Sigmoid colon (tissue), 7 donors: ENCODE measurements at regions of chr6 and their contacts with region 1.

Region 1: DNA sequence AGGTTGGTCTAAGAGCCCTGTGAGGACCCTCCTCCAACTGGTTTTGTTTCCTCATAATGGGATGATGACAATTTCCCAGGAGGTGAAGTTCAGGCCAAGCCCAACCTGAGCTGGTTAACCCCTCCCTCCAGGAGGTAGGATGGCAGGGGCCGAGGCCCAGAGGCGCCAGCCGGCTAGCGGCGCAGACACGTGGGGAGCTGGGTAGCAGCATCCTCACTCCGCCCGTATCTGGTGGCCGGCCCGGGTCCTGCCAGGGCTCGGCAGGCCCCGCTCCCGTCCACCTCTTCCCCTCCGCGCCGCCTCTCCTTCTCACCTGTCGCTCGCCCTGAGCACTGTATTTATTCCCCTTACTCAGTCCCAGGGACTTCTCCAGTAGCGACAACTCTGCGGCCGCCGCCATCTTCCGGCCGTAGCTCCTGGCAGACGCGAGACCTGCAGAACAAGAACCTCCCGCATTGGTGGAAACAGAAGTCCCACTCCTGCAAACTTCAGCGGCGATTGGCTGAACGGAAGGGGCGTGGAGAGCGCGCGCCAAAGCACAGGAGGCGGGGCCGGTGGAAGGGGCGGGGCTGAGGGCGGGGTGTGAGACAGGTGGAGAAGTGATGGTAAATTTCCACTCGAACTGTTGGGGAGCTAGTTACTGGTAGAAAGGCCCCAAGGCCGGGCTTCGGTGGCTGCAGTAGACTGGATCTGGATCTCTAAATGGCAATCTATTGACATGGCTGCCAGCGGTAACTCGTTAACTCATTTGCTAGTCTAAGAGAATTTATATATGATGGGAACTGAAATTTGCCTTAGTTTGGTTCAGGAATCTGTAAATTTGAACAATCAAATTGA is at the start of gene EEF1E1:
- DNase-seq: peak; percentile 95
- H3K4me3 ChIP-seq: peak within 1 kb of the TSS; percentile 78 to 93 (median 86)
- H3K27ac ChIP-seq: peak within 1 kb of the TSS; percentile 58 to 69 (median 64)
- H3K4me1 ChIP-seq: peaks cover 0 to 9% (median 8%) of the 10 kb centered on the region in 4 donors
- H3K27me3 ChIP-seq: peaks cover 0 to 13% (median 5%) of the 10 kb centered on the region in 3 donors
- CTCF ChIP-seq: no peak
- EP300 ChIP-seq: no peak
- POLR2A ChIP-seq: peak in 1 of 2 donors; percentile 14
- total RNA-seq, gene EEF1E1: 12.5 to 36.7 (median 25.5) TPM

Region 2: DNA sequence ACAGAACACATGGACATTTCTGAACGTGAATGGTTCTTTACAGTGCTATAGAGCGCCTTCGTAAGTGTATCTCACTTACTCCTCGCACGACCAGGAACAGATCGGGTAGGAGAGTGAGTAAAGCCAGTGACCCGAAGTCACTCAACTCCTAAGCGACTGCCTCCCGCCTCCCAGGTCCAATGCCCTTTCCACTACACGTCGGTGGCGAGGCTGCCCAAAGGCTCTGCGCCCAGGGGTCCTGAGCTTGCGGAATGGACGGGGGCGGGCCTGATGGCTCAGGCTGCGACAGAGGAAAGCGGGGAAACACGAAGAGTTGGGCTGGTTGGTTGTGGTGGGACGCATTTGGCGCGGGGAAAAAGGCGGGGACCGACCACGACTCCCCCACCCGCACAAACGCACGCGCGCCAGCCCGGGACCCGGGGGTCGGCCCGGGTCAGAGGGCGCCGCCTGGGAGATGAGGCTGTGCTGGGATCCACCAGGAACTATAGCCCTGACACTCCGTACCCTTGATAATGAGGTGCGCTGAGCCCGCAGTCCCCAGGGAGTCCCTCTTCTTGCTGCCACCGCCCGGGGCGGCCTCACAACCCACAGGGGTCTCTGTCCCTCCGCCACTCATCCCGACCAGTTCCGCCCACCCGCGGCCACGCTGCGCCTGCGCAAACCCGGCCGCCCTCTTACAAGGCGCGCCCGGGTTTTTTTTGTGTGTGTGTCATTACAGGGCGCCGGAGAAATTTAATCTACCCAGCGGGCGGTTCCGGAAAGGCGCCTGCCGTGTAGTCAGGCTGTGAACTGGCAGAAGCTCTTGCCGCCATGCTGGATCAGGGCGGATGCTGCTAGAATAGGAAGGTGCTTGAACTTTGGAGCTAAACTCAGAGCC is 38.3 kb before region 1 on chr6 and contains the start of gene BLOC1S5:
- intact Hi-C with region 1: loop called (anchors 2 kb)
- DNase-seq: peak; percentile 98
- H3K4me3 ChIP-seq: peak within 1 kb of the TSS; percentile 62 to 99 (median 82)
- H3K27ac ChIP-seq: peak within 1 kb of the TSS; percentile 87 to 96 (median 89)
- H3K4me1 ChIP-seq: peaks cover 0 to 16% (median 7%) of the 10 kb centered on the region in 4 donors
- H3K27me3 ChIP-seq: no peaks in the 10 kb centered on the region
- CTCF ChIP-seq: no peak
- EP300 ChIP-seq: no peak
- POLR2A ChIP-seq: peak; percentile 25 to 44
- total RNA-seq, gene BLOC1S5: 10.8 to 16.2 (median 12.8) TPM